ENCODE measurements at regions of chr18 and their contacts with region 1.

Region 1: DNA sequence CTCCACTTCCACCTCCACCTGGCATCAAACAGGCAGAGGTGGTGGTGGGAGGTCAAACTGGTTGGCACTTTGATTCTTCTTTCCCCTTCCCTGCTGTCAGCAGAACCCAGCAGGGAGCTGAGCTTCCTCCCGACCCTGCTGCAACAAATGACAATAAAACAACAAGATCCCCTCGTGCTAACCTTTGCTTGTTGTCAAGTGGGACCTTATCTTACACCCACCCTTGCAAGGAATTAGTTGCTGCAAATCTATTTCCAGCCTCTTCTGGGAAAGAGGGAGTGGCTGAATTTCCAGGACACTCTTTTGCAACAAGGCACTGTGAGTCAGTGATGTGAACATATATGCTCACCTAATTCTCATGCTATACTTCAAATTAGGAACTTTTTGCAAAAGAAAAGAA is 655.1 kb downstream of the DSC3 start:
- DNase-seq: no peak
- ATAC-seq: no peak

Region 2: GRCh38 chr18:30177056-30177455 is 210.3 kb before region 1 on chr18:
- intact Hi-C with region 1: loop called (anchors 5 kb)
- DNase-seq: no peak
- ATAC-seq: no peak

Region 3: GRCh38 chr18:30298769-30299168 is 88.6 kb before region 1 on chr18:
- intact Hi-C with region 1: no loop called
- DNase-seq: no peak
- ATAC-seq: no peak

Region 4: GRCh38 chr18:30828700-30829099 is 441.3 kb after region 1 on chr18:
- intact Hi-C with region 1: no loop called
- DNase-seq: no peak
- ATAC-seq: no peak

Measured in left ventricle myocardium superior (tissue), 1 donor.